ENCODE measurements at regions of chr16 and their contacts with region 1.

Region 1: GRCh38 chr16:66728117-66728787 is 23.2 kb downstream of the DYNC1LI2 start:
- DNase-seq: no peak
- ATAC-seq: peak; percentile 89

Region 2: DNA sequence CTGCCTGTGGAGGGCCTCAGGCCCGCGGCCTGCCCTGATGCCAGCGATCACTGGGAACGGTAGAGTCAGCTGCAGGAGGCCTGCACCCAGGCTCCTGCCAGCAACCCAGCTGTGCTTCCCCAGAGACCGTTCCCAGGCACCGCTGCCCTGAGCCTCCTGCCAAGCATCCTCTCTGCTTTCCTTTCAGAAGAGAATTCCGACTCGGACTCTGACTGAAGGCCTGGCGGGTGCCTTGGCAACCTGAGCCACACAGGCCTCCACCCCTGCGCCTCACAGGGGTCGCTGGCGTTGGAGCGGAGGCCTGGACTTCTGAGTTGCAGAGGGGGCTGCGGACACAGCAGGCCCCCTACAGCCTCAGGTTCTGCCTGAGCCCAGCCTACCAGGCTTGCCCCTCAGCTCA is 115.8 kb before region 1 on chr16:
- intact Hi-C with region 1: loop called (anchors 5 kb)
- DNase-seq: no peak
- ATAC-seq: no peak

Region 3: DNA sequence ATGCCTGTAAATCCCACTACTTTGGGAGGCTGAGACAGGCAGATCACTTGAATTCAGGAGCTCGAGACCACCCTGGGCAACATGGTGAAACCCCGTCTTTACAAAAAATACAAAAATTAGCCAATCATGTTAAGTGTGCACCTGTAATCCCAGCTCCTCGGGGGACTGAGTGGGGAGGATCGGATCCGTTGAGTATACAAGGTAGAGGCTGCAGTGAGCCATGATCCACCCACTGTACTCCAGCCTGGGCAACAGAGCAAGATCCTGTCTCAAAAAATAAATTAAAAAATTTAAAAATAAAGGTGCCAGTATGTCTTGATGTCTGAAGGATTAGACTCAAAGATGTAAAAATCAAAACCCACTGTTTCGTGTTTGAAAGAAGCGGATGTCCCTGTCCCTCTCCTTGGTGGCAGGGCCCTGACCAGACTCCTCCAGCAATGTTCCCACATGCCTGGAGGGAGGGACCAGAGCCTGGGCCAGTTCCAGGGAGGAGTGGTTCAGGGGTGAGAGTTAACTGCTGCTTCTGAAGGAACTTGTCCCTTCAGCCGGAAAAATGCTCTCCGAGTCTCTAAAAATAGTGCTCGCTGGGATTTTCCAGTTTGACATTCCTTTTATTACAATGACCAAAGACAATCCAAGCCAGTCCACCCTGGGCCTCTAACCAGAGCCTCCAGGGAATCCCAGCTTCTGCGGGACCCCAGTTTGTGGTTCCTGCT is 22.3 kb before region 1 on chr16:
- intact Hi-C with region 1: no loop called
- DNase-seq: peak; percentile 72
- ATAC-seq: peak; percentile 76

Region 4: DNA sequence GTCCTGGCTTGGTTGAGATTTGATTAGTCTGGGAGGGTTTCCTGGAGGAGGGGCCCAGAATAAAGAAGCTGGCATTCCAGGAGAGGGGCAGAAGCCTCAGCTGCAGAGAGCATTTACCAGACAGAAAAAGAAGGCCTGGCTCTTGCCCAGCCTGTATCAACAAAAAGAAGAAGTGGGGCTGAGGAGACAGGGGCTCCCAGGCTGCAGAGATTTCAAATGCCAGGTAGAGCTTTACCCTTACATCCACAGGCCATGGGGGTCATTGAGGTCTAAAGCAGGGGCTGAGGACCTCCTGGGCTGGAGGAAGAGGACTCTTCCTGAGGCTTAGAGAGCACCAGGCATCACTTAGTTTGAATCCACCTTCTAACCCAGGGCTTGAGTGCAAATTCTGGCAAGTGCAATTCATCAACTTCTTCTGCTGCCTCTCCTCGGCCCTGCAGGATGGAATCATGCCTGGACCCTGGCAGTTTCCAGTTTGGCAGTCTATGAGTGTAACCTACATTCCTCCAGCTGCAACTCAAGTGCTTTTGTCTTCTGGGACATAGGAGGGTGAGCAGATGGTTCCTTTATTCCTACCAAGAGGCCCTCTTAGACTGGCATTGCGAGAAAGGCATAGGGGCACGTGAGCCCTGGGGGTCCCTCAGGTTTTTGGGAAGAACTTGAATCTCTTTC is 131.3 kb after region 1 on chr16:
- intact Hi-C with region 1: loop called (anchors 10 kb)
- DNase-seq: no peak
- ATAC-seq: no peak